HCT116 (cell line): ENCODE measurements at regions of chr17 and their contacts with region 1.

Region 1: GRCh38 chr17:35170968-35171771 is 23.0 kb downstream of the SLC35G3 start:
- DNase-seq: no peak
- ATAC-seq: no peak; the same call in 1 of the 2 replicates
- H3K4me3 ChIP-seq: no peak overlapping the region
- H3K27ac ChIP-seq: no peak overlapping the region
- H3K4me1 ChIP-seq: no peaks in the 10 kb centered on the region
- H3K27me3 ChIP-seq: peaks cover 6% of the 10 kb centered on the region; the same call in 1 of the 2 replicates
- CTCF ChIP-seq: peak in 2 of 3 experiments; percentile 13 to 21; a peak in 2 of 6 replicates
- POLR2A ChIP-seq: no peak
- RAD21 ChIP-seq: peak; percentile 48

Region 2: GRCh38 chr17:35312790-35313711 is 141.9 kb after region 1 on chr17:
- CTCF ChIA-PET with region 1: no interaction called
- POLR2A ChIA-PET with region 1: no interaction called
- RAD21 ChIA-PET with region 1: no interaction called
- intact Hi-C with region 1: loop called (anchors 10 kb)
- DNase-seq: peak; percentile 37
- ATAC-seq: peak; percentile 98
- H3K4me3 ChIP-seq: no peak overlapping the region
- H3K27ac ChIP-seq: no peak overlapping the region
- H3K4me1 ChIP-seq: peaks cover 5 to 9% of the 10 kb centered on the region in 2 experiments; a peak in 3 of 4 replicates
- H3K27me3 ChIP-seq: 0 out of 2 replicates have a peak, but pooled peaks cover 9% of the 10 kb centered on the region
- CTCF ChIP-seq: peak; percentile 70 to 83 (median 74)
- POLR2A ChIP-seq: no peak
- RAD21 ChIP-seq: peak; percentile 75